ENCODE measurements at regions of chr10 and their contacts with region 1.

Region 1: DNA sequence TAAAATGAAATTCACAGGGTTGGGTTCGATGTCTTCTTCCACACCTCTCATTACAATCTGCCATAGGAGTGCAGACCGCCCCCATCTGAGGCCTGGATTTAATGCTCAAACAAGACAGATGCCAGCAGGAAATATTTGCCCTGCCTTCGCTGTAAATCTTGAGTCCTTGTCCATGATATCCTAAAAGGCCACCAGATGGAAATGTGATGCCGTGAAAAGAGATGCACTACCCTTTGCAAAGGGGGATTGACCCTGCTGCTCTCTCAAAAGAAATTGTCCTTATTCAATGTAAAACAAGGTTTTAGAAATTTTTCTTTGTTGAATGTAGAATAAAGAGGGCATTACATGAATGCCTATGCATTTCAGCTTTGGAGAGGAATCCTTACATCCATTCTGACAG is 37.5 kb downstream of the AGAP4 start:
- DNase-seq: peak; percentile 6
- ATAC-seq: no peak; the same call in 1 of the 2 replicates
- H3K4me3 ChIP-seq: no peak overlapping the region
- H3K27ac ChIP-seq: no peak overlapping the region
- H3K4me1 ChIP-seq: no peaks in the 10 kb centered on the region
- H3K27me3 ChIP-seq: no peaks in the 10 kb centered on the region
- CTCF ChIP-seq: 0 out of 2 replicates have a peak, but pooled peaks have one; percentile 23
- POLR2A ChIP-seq: no peak
- RAD21 ChIP-seq: peak; percentile 34; the same call in 1 of the 2 replicates

Region 2: GRCh38 chr10:45204954-45205775 is 604.7 kb before region 1 on chr10:
- CTCF ChIA-PET with region 1: no interaction called
- POLR2A ChIA-PET with region 1: no interaction called
- dilution Hi-C with region 1: no loop called
- in situ Hi-C with region 1: no loop called
- intact Hi-C with region 1: no loop called
- DNase-seq: no peak
- ATAC-seq: no peak
- H3K4me3 ChIP-seq: no peak overlapping the region
- H3K27ac ChIP-seq: no peak overlapping the region
- H3K4me1 ChIP-seq: no peaks in the 10 kb centered on the region
- H3K27me3 ChIP-seq: no peaks in the 10 kb centered on the region
- CTCF ChIP-seq: no peak
- POLR2A ChIP-seq: no peak
- RAD21 ChIP-seq: no peak

Region 3: GRCh38 chr10:46028584-46029460 is 219.0 kb after region 1 on chr10:
- CTCF ChIA-PET with region 1: no interaction called
- POLR2A ChIA-PET with region 1: no interaction called
- dilution Hi-C with region 1: no loop called
- in situ Hi-C with region 1: no loop called
- intact Hi-C with region 1: loop called (anchors 2 kb)
- DNase-seq: peak; percentile 81
- ATAC-seq: peak; percentile 40
- H3K4me3 ChIP-seq: peak overlapping the region; percentile 80
- H3K27ac ChIP-seq: no peak overlapping the region
- H3K4me1 ChIP-seq: peaks cover 18% of the 10 kb centered on the region
- H3K27me3 ChIP-seq: no peaks in the 10 kb centered on the region
- CTCF ChIP-seq: peak; percentile 79
- POLR2A ChIP-seq: no peak
- RAD21 ChIP-seq: peak; percentile 80